ENCODE measurements at regions of chr17 and their contacts with region 1.

Region 1: DNA sequence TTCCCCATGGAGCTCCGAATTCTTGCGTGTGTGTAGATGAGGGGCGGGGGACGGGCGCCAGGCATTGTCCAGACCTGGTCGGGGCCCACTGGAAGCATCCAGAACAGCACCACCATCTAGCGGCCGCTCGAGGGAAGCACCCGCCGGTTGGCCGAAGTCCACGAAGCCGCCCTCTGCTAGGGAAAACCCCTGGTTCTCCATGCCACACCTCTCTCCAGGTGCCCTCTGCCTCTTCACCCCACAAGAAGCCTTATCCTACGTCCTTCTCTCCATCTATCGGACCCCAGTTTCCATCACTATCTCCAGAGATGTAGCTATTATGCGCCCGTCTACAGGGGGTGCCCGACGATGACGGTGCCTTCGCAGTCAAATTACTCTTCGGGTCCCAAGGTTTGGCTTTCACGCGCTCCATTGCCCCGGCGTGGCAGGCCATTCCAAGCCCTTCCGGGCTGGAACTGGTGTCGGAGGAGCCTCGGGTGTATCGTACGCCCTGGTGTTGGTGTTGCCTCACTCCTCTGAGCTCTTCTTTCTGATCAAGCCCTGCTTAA is 617 bp upstream of the SENP3 start:
- DNase-seq: peak; percentile 93
- H3K4me3 ChIP-seq: peak overlapping the region; percentile 88 to 90
- H3K27ac ChIP-seq: peak overlapping the region; percentile 85 to 88
- H3K4me1 ChIP-seq: peaks cover 17 to 54% of the 10 kb centered on the region in 2 experiments
- H3K27me3 ChIP-seq: no peaks in the 10 kb centered on the region
- CTCF ChIP-seq: peak; percentile 73
- EP300 ChIP-seq: no peak
- RAD21 ChIP-seq: peak; percentile 84

Region 2: DNA sequence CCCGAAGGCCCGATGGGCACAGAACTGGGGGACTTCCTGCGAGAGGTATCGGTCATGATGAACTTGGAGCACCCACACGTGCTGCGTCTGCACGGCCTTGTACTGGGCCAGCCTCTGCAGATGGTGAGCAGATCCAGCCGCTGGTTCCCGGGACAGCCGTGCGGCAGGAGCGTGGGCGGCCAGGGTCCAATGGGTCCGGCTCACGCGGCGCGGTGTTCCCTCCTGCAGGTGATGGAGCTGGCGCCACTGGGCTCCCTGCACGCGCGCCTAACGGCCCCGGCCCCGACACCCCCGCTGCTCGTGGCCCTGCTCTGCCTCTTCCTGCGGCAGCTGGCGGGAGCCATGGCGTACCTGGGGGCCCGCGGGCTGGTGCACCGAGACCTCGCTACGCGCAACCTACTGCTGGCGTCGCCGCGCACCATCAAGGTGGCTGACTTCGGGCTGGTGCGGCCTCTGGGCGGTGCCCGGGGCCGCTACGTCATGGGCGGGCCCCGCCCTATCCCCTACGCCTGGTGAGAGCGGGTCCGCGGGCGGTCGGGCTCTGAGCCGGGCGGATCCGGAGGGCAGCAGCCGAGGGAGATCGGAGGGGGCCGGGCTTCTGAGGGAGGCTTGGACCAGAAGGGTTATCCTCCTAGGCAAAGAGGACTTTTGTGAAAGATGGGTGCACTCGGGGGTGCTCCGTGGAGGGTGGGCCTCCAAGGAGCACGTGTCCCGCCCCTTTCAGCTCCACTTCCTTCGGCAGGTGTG is 177.2 kb before region 1 on chr17:
- CTCF ChIA-PET with region 1: interaction called, 12 read pairs
- POLR2A ChIA-PET with region 1: no interaction called
- DNase-seq: peak; percentile 95
- H3K4me3 ChIP-seq: peak overlapping the region in 1 of 2 experiments; percentile 42; a peak in 2 of 4 replicates
- H3K27ac ChIP-seq: peak overlapping the region in 1 of 2 experiments; percentile 25; a peak in 1 of 4 replicates
- H3K4me1 ChIP-seq: peaks cover 0 to 32% of the 10 kb centered on the region in 2 experiments; a peak in 2 of 4 replicates
- H3K27me3 ChIP-seq: peaks cover 8% of the 10 kb centered on the region; the same call in 1 of the 2 replicates
- CTCF ChIP-seq: no peak
- EP300 ChIP-seq: no peak
- RAD21 ChIP-seq: no peak

Region 3: GRCh38 chr17:7478276-7479153 is 82.6 kb before region 1 on chr17:
- CTCF ChIA-PET with region 1: interaction called, 11 read pairs
- POLR2A ChIA-PET with region 1: no interaction called
- DNase-seq: peak; percentile 88
- H3K4me3 ChIP-seq: peak overlapping the region; percentile 72 to 77
- H3K27ac ChIP-seq: peak overlapping the region; percentile 78 to 90
- H3K4me1 ChIP-seq: peaks cover 26 to 32% of the 10 kb centered on the region in 2 experiments; a peak in 2 of 4 replicates
- H3K27me3 ChIP-seq: no peaks in the 10 kb centered on the region
- CTCF ChIP-seq: no peak
- EP300 ChIP-seq: no peak
- RAD21 ChIP-seq: no peak

Region 4: GRCh38 chr17:7515911-7516610 is 45.0 kb before region 1 on chr17:
- CTCF ChIA-PET with region 1: interaction called, 236 read pairs
- POLR2A ChIA-PET with region 1: interaction called, 3 read pairs
- DNase-seq: no peak
- H3K4me3 ChIP-seq: no peak overlapping the region
- H3K27ac ChIP-seq: no peak overlapping the region
- H3K4me1 ChIP-seq: no peaks in the 10 kb centered on the region
- H3K27me3 ChIP-seq: no peaks in the 10 kb centered on the region
- CTCF ChIP-seq: no peak
- EP300 ChIP-seq: no peak
- RAD21 ChIP-seq: no peak

Region 5: DNA sequence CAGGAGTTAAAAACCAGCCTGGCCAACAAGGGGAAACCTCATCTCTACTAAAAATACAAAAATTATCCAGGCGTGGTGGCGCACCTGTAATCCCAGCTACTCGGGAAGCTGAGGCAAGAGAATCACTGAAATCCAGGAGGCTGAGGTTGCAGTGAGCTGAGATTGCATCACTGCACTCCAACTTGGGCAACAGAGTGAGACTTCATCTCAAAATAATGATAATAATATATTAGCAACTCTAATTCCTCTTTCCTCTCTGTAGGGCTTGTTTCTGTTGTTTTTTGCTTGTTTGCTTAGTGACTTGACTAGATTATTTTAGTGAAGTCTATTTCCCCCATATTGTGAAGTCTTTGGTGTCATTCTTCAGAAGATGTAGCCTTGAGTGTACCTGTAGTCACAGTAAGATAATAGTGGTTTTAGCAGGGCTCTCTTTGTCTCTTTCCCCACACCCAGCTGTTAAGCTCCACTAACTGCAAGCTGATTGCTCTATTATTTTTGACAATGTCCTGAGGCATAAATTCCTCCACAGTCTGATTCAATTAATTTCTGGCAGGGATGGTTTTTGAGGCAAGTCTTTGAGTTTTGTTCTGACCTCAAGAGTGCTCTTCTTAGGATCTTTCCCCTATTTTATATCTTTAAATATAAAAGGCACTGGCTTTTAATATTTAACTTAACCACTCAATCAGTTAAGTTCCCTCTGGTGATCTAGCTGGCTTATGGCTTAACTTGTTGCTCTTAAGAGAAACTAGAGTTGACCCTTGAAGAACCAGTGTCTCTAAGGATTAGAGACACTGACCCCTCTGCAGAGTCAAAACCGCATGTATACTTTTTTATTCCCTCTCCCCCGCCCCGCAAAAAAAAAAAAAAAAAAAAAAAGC is 30.8 kb before region 1 on chr17:
- CTCF ChIA-PET with region 1: interaction called, 13 read pairs
- POLR2A ChIA-PET with region 1: no interaction called
- DNase-seq: no peak
- H3K4me3 ChIP-seq: no peak overlapping the region
- H3K27ac ChIP-seq: no peak overlapping the region
- H3K4me1 ChIP-seq: no peaks in the 10 kb centered on the region
- H3K27me3 ChIP-seq: no peaks in the 10 kb centered on the region; the same call in 1 of the 2 replicates
- CTCF ChIP-seq: no peak
- EP300 ChIP-seq: no peak
- RAD21 ChIP-seq: no peak

Region 6: DNA sequence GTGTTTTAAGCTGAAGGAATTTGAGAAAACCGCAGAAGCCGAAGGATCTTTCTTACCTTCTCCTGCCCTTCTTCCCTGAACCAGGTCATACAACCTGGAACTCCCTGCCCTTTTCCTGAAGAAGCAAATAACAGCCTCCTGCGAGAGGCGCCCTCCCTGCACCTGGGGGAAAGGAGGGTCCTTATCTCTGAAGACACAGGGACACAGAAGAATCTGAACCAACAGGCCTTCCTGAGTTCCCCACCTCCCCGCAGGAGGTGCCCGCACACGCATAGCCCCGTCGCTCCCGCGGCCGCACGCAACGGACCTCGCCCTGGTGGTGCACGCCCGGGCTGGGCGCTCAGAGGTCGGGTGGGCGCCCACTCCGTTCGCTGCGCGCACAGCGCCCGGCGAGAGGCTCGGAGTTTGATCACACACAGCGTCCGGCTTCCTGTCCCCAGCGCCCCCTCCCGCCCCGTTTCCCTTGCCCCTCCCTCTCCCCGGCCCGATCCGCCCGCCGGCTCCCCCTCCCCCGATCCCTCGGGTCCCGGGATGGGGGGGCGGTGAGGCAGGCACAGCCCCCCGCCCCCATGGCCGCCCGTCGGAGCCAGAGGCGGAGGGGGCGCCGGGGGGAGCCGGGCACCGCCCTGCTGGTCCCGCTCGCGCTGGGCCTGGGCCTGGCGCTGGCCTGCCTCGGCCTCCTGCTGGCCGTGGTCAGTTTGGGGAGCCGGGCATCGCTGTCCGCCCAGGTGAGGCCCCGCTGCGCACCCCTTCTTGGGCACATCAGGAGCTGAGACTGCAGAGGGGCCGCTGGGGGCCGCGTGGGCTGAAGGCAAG is 12.3 kb before region 1 on chr17 and contains the start of gene TNFSF12:
- CTCF ChIA-PET with region 1: interaction called, 55 read pairs
- POLR2A ChIA-PET with region 1: interaction called, 7 read pairs
- DNase-seq: peak; percentile 92
- H3K4me3 ChIP-seq: peak within 1 kb of the TSS; percentile 57 to 76
- H3K27ac ChIP-seq: peak within 1 kb of the TSS; percentile 26 to 45; a peak in 2 of 4 replicates
- H3K4me1 ChIP-seq: peaks cover 0 to 8% of the 10 kb centered on the region in 2 experiments; a peak in 1 of 4 replicates
- H3K27me3 ChIP-seq: no peaks in the 10 kb centered on the region; the same call in 1 of the 2 replicates
- CTCF ChIP-seq: peak; percentile 28; the same call in 1 of the 2 replicates
- EP300 ChIP-seq: no peak
- RAD21 ChIP-seq: no peak
- polyA plus RNA-seq, gene TNFSF12: 31.1 and 47.6 TPM in 2 replicates

Region 7: GRCh38 chr17:7583253-7584109 is 22.4 kb after region 1 on chr17 and contains the start of gene MPDU1:
- CTCF ChIA-PET with region 1: interaction called, 22 read pairs
- POLR2A ChIA-PET with region 1: interaction called, 6 read pairs
- DNase-seq: peak; percentile 93
- H3K4me3 ChIP-seq: peak within 1 kb of the TSS; percentile 65 to 73
- H3K27ac ChIP-seq: peak within 1 kb of the TSS; percentile 97 to 98
- H3K4me1 ChIP-seq: peaks cover 22 to 32% of the 10 kb centered on the region in 2 experiments; a peak in 3 of 4 replicates
- H3K27me3 ChIP-seq: no peaks in the 10 kb centered on the region
- CTCF ChIP-seq: no peak
- EP300 ChIP-seq: no peak
- RAD21 ChIP-seq: no peak
- polyA plus RNA-seq, gene MPDU1: 126 and 142 TPM in 2 replicates

Region 8: DNA sequence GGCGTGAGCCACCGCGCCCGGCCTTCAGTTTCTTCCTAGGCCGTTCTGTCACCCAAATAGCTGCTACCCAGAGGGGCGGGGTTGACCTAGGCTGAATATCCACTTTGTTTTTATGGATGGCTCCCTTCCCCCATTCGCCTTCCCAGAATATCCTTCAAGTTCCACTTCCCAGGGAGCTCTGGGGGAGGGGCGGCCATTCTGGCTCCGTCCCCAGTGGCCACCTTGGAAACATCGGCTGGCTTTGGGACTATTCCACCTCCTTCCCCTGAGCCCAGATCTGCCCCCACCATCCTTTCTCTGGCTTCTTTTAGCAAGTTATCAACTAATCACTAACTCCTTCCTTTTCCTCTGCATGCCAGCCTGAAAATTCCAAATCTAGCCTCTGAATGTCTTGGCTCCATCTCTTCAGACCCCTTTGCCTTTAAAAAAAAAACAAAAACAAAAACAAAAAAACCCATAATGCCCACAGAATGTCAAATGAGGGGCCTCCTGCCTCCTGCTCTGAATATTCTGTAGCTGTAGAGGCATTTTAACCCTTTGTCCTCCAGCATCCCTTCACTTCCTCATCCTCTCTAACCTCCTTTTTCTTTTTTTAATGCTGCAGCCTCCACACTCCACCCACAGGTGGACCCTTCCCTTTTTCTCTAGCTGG is 96.0 kb after region 1 on chr17:
- CTCF ChIA-PET with region 1: no interaction called
- POLR2A ChIA-PET with region 1: no interaction called
- DNase-seq: peak; percentile 20
- H3K4me3 ChIP-seq: no peak overlapping the region
- H3K27ac ChIP-seq: no peak overlapping the region
- H3K4me1 ChIP-seq: no peaks in the 10 kb centered on the region
- H3K27me3 ChIP-seq: peaks cover 7% of the 10 kb centered on the region
- CTCF ChIP-seq: no peak
- EP300 ChIP-seq: no peak
- RAD21 ChIP-seq: no peak

Region 9: DNA sequence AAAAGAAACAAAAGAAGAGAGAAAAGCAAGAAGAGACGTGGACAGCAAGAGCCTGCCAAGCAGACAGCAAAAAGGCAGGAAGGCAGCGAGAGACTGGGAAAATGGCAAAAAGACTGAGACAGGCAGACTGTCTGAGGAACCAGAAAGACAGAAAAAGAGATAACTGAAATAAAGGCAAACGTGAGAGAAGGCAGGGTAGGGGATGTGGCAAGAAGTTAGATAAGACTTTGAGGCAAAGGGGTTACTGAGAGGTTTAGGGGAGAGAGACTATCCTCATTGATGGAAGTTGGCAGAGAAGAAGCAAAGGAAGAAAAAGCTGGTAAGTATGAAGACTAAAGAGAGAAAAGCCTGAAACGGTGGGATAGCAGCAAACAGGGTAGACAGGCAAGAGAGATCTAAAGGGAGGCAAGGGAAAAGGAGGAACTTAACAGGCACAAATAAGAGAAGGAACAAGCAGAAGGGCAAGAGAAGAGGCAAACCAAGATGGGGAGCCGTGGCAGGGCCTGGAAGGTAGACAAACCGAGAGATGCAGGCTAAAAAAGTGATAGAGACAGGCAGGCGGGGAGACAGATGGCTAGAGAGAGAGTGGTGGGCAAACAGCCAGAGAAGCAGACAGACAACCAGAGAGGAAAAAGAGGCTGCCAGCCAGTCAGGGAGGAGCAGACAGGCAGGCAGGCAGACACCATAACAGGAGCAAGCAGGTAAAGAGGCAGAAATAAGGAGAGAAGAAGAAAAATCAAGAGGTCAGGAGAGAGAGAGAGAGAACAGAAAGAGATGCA is 320.4 kb after region 1 on chr17:
- CTCF ChIA-PET with region 1: no interaction called
- POLR2A ChIA-PET with region 1: no interaction called
- DNase-seq: peak; percentile 65
- H3K4me3 ChIP-seq: 0 out of 4 replicates have a peak overlapping the region, but pooled peaks of 1 of the 2 experiments have one; percentile 6
- H3K27ac ChIP-seq: peak overlapping the region; percentile 69 to 100; a peak in 3 of 4 replicates
- H3K4me1 ChIP-seq: peaks cover 13 to 47% of the 10 kb centered on the region in 2 experiments
- H3K27me3 ChIP-seq: no peaks in the 10 kb centered on the region
- CTCF ChIP-seq: no peak
- EP300 ChIP-seq: peak in 1 of 2 experiments; percentile 49; a peak in 1 of 4 replicates
- RAD21 ChIP-seq: peak; percentile 20; the same call in 1 of the 2 replicates